GM12878 (cell line): ENCODE measurements at regions of chr14 and their contacts with region 1.

Region 1: GRCh38 chr14:73290279-73290678 is 53.0 kb downstream of the PAPLN start:
- DNase-seq: peak; percentile 64
- ATAC-seq: peak; percentile 79
- H3K4me3 ChIP-seq: peak overlapping the region; percentile 22; the same call in 1 of the 2 replicates
- H3K27ac ChIP-seq: peak overlapping the region; percentile 55; the same call in 1 of the 2 replicates
- H3K4me1 ChIP-seq: peaks cover 35% of the 10 kb centered on the region
- H3K27me3 ChIP-seq: no peaks in the 10 kb centered on the region
- CTCF ChIP-seq: no peak
- EP300 ChIP-seq: peak; percentile 32 to 89; a peak in 3 of 4 replicates
- POLR2A ChIP-seq: no peak
- RAD21 ChIP-seq: no peak

Region 2: DNA sequence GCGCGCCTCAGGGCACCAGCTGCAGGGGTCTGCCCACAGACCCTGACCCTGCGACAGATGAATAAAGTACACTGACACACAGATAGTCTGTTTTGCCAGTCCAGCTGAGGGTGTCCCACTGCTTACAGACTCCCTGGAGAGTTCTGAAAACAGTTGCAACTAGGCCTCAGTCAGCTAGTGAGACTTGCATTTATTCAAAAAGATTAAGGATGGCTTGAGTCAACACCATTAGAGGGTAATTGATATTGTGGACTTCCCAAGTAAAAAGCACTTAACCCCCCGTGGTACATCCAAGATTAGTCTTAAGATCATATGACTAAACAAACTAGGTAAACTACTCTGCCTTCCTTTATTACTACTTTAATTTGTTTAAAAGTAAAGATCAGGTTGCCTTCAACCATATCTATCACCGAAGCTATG is 165.1 kb before region 1 on chr14:
- CTCF ChIA-PET with region 1: no interaction called
- POLR2A ChIA-PET with region 1: no interaction called
- RAD21 ChIA-PET with region 1: no interaction called
- SMC1A ChIA-PET with region 1: no interaction called
- in situ Hi-C with region 1: no loop called
- intact Hi-C with region 1: no loop called
- DNase-seq: no peak
- ATAC-seq: no peak
- H3K4me3 ChIP-seq: no peak overlapping the region
- H3K27ac ChIP-seq: no peak overlapping the region
- H3K4me1 ChIP-seq: no peaks in the 10 kb centered on the region
- H3K27me3 ChIP-seq: no peaks in the 10 kb centered on the region
- CTCF ChIP-seq: no peak
- EP300 ChIP-seq: no peak
- POLR2A ChIP-seq: no peak
- RAD21 ChIP-seq: no peak

Region 3: GRCh38 chr14:73198253-73198652 is 92.0 kb before region 1 on chr14:
- CTCF ChIA-PET with region 1: no interaction called
- POLR2A ChIA-PET with region 1: no interaction called
- RAD21 ChIA-PET with region 1: no interaction called
- SMC1A ChIA-PET with region 1: no interaction called
- in situ Hi-C with region 1: no loop called
- intact Hi-C with region 1: no loop called
- DNase-seq: no peak
- ATAC-seq: no peak
- H3K4me3 ChIP-seq: no peak overlapping the region
- H3K27ac ChIP-seq: no peak overlapping the region
- H3K4me1 ChIP-seq: no peaks in the 10 kb centered on the region
- H3K27me3 ChIP-seq: no peaks in the 10 kb centered on the region
- CTCF ChIP-seq: no peak
- EP300 ChIP-seq: no peak
- POLR2A ChIP-seq: no peak
- RAD21 ChIP-seq: no peak

Region 4: GRCh38 chr14:73223049-73223448 is 67.2 kb before region 1 on chr14:
- CTCF ChIA-PET with region 1: interaction called, 16 read pairs
- POLR2A ChIA-PET with region 1: no interaction called
- RAD21 ChIA-PET with region 1: interaction called, 15 read pairs
- SMC1A ChIA-PET with region 1: interaction called, 10 read pairs
- in situ Hi-C with region 1: no loop called
- intact Hi-C with region 1: no loop called
- DNase-seq: peak; percentile 63
- ATAC-seq: peak; percentile 96
- H3K4me3 ChIP-seq: no peak overlapping the region
- H3K27ac ChIP-seq: peak overlapping the region; percentile 20; the same call in 1 of the 2 replicates
- H3K4me1 ChIP-seq: peaks cover 9% of the 10 kb centered on the region; the same call in 1 of the 2 replicates
- H3K27me3 ChIP-seq: no peaks in the 10 kb centered on the region
- CTCF ChIP-seq: peak in 1 of 3 experiments; percentile 50; a peak in 2 of 6 replicates
- EP300 ChIP-seq: no peak
- POLR2A ChIP-seq: peak; percentile 49; the same call in 1 of the 2 replicates
- RAD21 ChIP-seq: peak; percentile 32; the same call in 1 of the 2 replicates

Region 5: GRCh38 chr14:73245401-73246325 is 44.6 kb before region 1 on chr14:
- CTCF ChIA-PET with region 1: interaction called, 9 read pairs
- POLR2A ChIA-PET with region 1: interaction called, 6 read pairs
- RAD21 ChIA-PET with region 1: interaction called, 13 read pairs
- SMC1A ChIA-PET with region 1: interaction called, 6 read pairs
- in situ Hi-C with region 1: no loop called
- intact Hi-C with region 1: loop called (anchors 5 kb)
- DNase-seq: no peak
- ATAC-seq: peak; percentile 71
- H3K4me3 ChIP-seq: peak overlapping the region; percentile 66
- H3K27ac ChIP-seq: peak overlapping the region; percentile 15
- H3K4me1 ChIP-seq: peaks cover 58% of the 10 kb centered on the region
- H3K27me3 ChIP-seq: no peaks in the 10 kb centered on the region
- CTCF ChIP-seq: no peak
- EP300 ChIP-seq: no peak
- POLR2A ChIP-seq: peak; percentile 71
- RAD21 ChIP-seq: no peak

Region 6: GRCh38 chr14:73311708-73312030 is 21.4 kb after region 1 on chr14:
- CTCF ChIA-PET with region 1: interaction called, 13 read pairs
- POLR2A ChIA-PET with region 1: interaction called, 3 read pairs
- RAD21 ChIA-PET with region 1: interaction called, 14 read pairs
- SMC1A ChIA-PET with region 1: interaction called, 20 read pairs
- in situ Hi-C with region 1: no loop called
- intact Hi-C with region 1: no loop called
- DNase-seq: no peak
- ATAC-seq: peak; percentile 39
- H3K4me3 ChIP-seq: no peak overlapping the region
- H3K27ac ChIP-seq: no peak overlapping the region
- H3K4me1 ChIP-seq: no peaks in the 10 kb centered on the region
- H3K27me3 ChIP-seq: no peaks in the 10 kb centered on the region
- CTCF ChIP-seq: no peak
- EP300 ChIP-seq: no peak
- POLR2A ChIP-seq: no peak
- RAD21 ChIP-seq: no peak

Region 7: DNA sequence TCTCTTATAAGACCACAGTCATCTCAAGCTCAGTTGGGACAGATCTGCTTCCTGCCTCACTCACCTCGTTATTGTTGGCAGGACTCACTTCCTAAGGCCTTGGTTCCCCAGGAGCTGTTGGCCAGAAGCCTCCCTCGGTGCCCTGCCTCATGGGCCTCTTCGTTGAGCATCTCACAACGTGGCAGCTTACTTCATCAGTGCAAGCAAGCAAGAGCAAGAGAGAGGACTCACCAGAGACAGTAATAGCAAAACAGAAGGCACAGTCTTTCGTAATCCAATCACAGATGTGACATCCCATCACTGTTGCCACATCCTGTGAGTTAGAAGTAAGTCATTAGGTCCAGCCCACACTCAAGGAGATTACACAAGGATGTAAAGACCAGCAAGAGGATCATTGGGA is 173.1 kb after region 1 on chr14:
- CTCF ChIA-PET with region 1: interaction called, 252 read pairs
- POLR2A ChIA-PET with region 1: interaction called, 23 read pairs
- RAD21 ChIA-PET with region 1: interaction called, 591 read pairs
- SMC1A ChIA-PET with region 1: interaction called, 311 read pairs
- in situ Hi-C with region 1: loop called (anchors 5 kb)
- intact Hi-C with region 1: no loop called
- DNase-seq: no peak
- ATAC-seq: peak; percentile 2; the same call in 1 of the 3 replicates
- H3K4me3 ChIP-seq: no peak overlapping the region
- H3K27ac ChIP-seq: no peak overlapping the region
- H3K4me1 ChIP-seq: peaks cover 30% of the 10 kb centered on the region
- H3K27me3 ChIP-seq: no peaks in the 10 kb centered on the region
- CTCF ChIP-seq: no peak
- EP300 ChIP-seq: no peak
- POLR2A ChIP-seq: no peak
- RAD21 ChIP-seq: no peak